Cardiac septum (tissue), 1 donor: ENCODE measurements at regions of chr14 and their contacts with region 1.

Region 1: DNA sequence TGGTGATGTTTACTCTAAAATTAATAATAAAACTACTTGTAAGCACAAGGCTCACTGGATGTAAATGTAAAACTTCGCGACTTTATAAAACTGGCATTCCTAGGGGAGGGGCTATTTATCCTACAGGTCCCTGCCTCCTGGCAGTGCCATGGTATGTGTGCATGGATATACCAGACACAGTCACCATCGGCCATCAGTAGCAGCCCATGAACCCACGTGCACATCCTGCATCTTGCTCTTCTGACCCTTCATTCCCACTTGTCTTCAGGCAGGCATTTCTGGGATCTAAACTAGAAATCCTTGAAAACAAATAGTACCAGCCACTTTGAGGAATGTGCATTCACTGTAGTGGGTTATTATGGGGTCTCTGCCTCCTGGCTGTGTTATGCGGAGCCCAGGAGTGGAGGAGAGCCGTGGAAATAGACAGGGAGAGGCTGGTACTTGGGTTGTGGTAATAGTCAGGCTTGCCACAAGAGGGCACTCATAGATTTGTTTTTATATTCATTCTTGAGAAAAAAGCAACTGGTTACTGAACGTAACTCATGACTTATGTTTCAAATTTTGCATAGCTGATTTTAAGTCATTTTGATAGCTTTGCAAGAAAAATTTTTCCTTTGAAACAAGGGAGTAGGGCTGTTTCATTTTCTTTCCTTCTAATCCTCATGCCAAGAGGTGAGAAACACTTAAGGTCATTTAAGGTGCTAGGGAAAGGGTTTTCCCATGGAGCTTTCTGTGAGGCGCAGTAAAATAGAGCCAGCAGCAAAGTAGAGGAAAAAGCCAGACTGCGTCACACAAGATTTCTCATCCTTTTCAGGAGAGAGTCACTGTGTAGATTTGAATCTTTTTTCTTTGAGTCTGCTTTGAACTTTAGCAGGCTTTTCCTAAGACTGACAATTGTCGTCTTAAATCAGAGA is 17.4 kb upstream of the GALNT16 start:
- DNase-seq: no peak

Region 2: GRCh38 chr14:69068744-69069421 is 173.7 kb before region 1 on chr14:
- intact Hi-C with region 1: no loop called
- DNase-seq: no peak

Region 3: GRCh38 chr14:69129264-69129880 is 113.2 kb before region 1 on chr14:
- intact Hi-C with region 1: loop called (anchors 5 kb)
- DNase-seq: peak; percentile 83

Region 4: GRCh38 chr14:69153131-69153872 is 89.3 kb before region 1 on chr14:
- intact Hi-C with region 1: loop called (anchors 5 kb)
- DNase-seq: peak; percentile 97

Region 5: DNA sequence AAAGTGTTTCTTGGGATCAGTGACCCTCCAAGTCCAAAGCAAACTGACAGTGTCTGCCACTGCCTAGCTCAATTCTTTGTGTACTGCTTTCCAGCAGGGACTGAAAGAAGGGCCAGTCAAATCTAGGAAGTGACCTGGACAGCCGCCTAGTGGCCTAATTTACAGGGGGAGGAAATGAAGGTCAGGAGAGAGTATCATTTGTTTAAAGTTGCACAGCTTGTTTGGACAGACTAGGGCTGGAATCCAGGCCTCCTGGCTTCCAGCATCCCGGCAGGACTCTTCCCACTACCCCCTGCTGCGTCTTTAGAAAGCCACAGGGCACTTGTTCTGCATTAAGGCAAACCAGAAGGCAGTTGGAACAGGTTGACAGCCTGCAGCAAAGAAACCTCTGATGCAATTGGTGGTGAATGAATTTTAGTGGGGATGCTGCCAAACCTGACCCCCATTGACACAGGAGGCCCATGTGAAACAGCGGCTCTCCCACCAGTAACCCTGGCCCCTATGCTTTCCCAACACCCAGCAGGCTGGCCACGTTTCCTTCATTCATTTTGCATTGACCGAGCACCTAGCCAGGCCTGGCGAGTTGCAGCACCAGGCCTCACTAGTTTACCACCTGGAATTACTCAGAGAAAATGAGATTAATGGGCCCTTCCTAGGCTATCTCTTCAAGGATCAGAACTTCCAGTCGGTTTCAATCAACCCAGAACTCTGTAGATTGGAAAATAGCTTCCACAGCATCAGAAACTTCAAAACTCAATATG is 45.6 kb after region 1 on chr14:
- intact Hi-C with region 1: loop called (anchors 5 kb)
- DNase-seq: peak; percentile 80

Region 6: DNA sequence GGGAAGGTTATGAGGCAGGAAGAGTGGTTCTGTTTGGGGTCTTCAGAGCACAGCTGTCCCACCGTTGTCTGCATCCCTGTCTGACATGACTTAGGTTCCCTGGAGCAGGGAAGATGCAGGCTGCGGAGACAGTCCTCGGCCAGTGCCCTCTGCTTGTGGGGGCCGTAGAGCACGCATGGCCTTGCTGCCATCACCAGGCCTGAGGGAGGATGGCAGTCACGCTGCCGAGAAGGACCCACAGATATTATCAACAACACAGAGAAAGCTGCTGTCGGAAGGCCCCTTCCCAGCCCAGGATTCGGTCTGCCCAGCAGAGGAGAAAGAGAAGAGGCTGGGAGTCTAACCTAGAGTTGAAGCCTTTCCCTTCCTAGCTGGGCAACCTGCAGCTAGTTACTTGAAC is 120.5 kb after region 1 on chr14:
- intact Hi-C with region 1: loop called (anchors 5 kb)
- DNase-seq: no peak

Region 7: DNA sequence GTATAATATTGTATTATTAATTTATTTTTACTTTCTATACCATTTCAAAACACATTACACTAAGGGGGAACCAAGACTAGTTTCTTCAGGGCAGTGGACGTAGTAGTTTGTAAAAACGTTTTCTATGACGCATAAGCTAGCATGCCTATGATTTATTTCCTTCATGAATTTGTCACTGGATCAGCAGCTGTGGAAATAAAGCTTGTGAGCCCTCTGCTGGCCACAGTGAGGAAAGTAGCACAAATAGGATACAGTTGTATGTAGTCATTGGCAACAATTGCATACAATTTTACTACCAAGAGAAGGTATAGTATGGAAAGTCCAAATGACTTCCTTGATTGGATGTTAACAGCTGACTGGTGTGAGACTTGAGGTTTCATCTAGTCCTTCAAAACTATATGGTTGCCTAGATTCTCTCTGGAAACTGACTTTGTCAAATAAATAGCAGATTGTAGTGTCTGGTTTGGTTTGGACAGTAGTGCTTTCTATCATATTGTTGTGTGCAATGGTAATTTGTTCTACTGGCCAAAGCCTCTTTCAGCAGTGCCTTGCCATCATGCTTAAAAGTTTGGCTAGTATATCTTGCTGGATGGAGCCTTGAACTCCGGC is 217.6 kb after region 1 on chr14:
- intact Hi-C with region 1: loop called (anchors 2 kb)
- DNase-seq: no peak